ENCODE measurements at regions of chr19 and their contacts with region 1.

Region 1: GRCh38 chr19:47697863-47698609 is 15.2 kb upstream of the EHD2 start:
- DNase-seq: peak; percentile 84 to 87
- H3K4me3 ChIP-seq: no peak overlapping the region
- H3K4me3 Mint-ChIP-seq: no peak overlapping the region
- H3K27ac Mint-ChIP-seq: peak overlapping the region; percentile 56
- H3K4me1 ChIP-seq: peaks cover 6% of the 10 kb centered on the region
- H3K4me1 Mint-ChIP-seq: no peaks in the 10 kb centered on the region
- H3K27me3 ChIP-seq: no peaks in the 10 kb centered on the region
- H3K27me3 Mint-ChIP-seq: no peaks in the 10 kb centered on the region
- CTCF ChIP-seq: peak; percentile 99

Region 2: GRCh38 chr19:47494729-47495128 is 203.3 kb before region 1 on chr19:
- CTCF ChIA-PET with region 1: no interaction called
- POLR2A ChIA-PET with region 1: no interaction called
- intact Hi-C with region 1: loop called (anchors 5 kb)
- DNase-seq: no peak
- H3K4me3 ChIP-seq: no peak overlapping the region
- H3K4me3 Mint-ChIP-seq: no peak overlapping the region
- H3K27ac Mint-ChIP-seq: no peak overlapping the region
- H3K4me1 ChIP-seq: peaks cover 6% of the 10 kb centered on the region; the same call in 1 of the 2 replicates
- H3K4me1 Mint-ChIP-seq: no peaks in the 10 kb centered on the region
- H3K27me3 ChIP-seq: no peaks in the 10 kb centered on the region
- H3K27me3 Mint-ChIP-seq: no peaks in the 10 kb centered on the region
- CTCF ChIP-seq: no peak

Region 3: DNA sequence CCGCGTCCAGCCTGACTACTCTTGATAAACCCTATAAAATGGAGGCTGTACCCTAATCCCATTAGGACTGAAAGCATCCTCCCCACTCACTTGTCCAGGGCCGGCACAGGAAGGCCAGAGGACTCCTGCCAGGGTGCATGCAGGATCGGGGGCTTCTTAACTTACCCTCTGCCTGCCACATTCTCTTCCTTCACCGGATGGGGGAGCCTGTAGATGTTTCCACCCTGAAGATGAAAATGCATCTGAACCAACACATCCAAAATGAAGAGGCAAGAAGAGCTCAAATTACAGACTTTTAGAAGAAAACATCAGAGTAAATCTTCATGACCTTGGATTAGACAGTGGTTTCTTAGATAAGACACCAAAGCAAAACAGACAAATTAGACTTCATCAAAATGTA is 157.3 kb before region 1 on chr19:
- CTCF ChIA-PET with region 1: interaction called, 3 read pairs
- POLR2A ChIA-PET with region 1: no interaction called
- intact Hi-C with region 1: loop called (anchors 2 kb)
- DNase-seq: peak in 1 of 2 experiments; percentile 49
- H3K4me3 ChIP-seq: no peak overlapping the region
- H3K4me3 Mint-ChIP-seq: no peak overlapping the region
- H3K27ac Mint-ChIP-seq: no peak overlapping the region
- H3K4me1 ChIP-seq: no peaks in the 10 kb centered on the region
- H3K4me1 Mint-ChIP-seq: peaks cover 6% of the 10 kb centered on the region
- H3K27me3 ChIP-seq: no peaks in the 10 kb centered on the region
- H3K27me3 Mint-ChIP-seq: no peaks in the 10 kb centered on the region
- CTCF ChIP-seq: peak; percentile 31 to 69

Region 4: GRCh38 chr19:47813304-47814004 is 115.4 kb after region 1 on chr19:
- CTCF ChIA-PET with region 1: no interaction called
- POLR2A ChIA-PET with region 1: no interaction called
- intact Hi-C with region 1: no loop called
- DNase-seq: peak; percentile 85 to 92
- H3K4me3 ChIP-seq: no peak overlapping the region
- H3K4me3 Mint-ChIP-seq: no peak overlapping the region
- H3K27ac Mint-ChIP-seq: no peak overlapping the region
- H3K4me1 ChIP-seq: no peaks in the 10 kb centered on the region
- H3K4me1 Mint-ChIP-seq: no peaks in the 10 kb centered on the region
- H3K27me3 ChIP-seq: no peaks in the 10 kb centered on the region
- H3K27me3 Mint-ChIP-seq: no peaks in the 10 kb centered on the region
- CTCF ChIP-seq: peak; percentile 81 to 86